ENCODE measurements at regions of chr22 and their contacts with region 1.

Region 1: DNA sequence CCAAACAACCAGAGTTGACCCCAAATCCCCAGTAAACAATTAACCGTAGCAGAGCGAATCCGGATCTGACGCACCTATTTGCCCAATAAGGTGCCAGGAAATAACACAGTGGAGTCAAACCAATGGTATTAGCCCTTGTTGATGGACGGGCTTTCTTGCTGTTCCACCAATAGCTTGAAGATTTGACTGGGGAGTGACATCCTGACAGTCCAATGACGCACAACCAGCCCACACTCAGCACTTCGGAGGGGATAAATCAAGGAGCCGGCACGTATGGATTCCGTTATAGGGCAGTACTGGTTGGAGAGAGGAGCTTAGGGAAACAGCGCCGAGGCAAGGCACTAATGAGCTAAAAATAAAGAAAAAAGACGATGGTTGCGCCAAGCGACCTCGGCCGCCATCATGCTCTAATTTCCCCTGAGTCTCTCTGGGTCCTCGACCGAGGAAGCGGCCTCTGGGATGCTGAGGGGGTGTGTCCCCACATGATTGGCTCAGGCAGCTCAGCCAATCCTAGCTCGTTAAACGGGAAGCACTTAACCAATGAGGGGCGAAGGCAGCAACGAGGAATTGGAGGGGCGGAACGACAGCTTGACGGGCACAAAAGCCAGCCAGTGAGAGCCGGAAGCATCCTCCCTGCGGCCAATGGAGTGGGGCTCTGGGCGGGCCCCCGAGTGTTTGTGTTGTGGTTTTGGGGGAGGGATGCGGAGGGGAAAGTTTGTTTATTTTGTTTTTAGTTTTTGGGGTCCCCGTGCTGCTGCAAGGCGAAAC is 49.5 kb downstream of the FAM83F start:
- DNase-seq: peak; percentile 99
- ATAC-seq: peak; percentile 91 to 92
- H3K4me3 ChIP-seq: peak overlapping the region; percentile 72 to 86 (median 76)
- H3K27ac ChIP-seq: peak overlapping the region; percentile 91 to 98 (median 94)
- H3K4me1 ChIP-seq: peaks cover 41 to 47% of the 10 kb centered on the region in 2 donors
- H3K27me3 ChIP-seq: no peaks in the 10 kb centered on the region
- CTCF ChIP-seq: no peak
- POLR2A ChIP-seq: peak; percentile 72 to 92

Region 2: GRCh38 chr22:39152511-39153219 is 891.6 kb before region 1 on chr22 and contains the start of gene CBX7:
- in situ Hi-C with region 1: no loop called
- intact Hi-C with region 1: loop called (anchors 2 kb)
- DNase-seq: peak; percentile 90 to 95
- ATAC-seq: peak; percentile 79 to 87
- H3K4me3 ChIP-seq: peak within 1 kb of the TSS; percentile 85 to 98 (median 97)
- H3K27ac ChIP-seq: peak within 1 kb of the TSS; percentile 94 to 99 (median 98)
- H3K4me1 ChIP-seq: peaks cover 29 to 31% of the 10 kb centered on the region in 2 donors
- H3K27me3 ChIP-seq: no peaks in the 10 kb centered on the region
- CTCF ChIP-seq: no peak
- POLR2A ChIP-seq: peak; percentile 87 to 96
- total RNA-seq, gene CBX7: 52.4 to 78.1 (median 62.3) TPM

Region 3: GRCh38 chr22:39980596-39980995 is 63.7 kb before region 1 on chr22:
- in situ Hi-C with region 1: no loop called
- intact Hi-C with region 1: no loop called
- DNase-seq: no peak
- ATAC-seq: no peak
- H3K4me3 ChIP-seq: no peak overlapping the region
- H3K27ac ChIP-seq: no peak overlapping the region
- H3K4me1 ChIP-seq: no peaks in the 10 kb centered on the region
- H3K27me3 ChIP-seq: peaks cover 0 to 28% (median 6%) of the 10 kb centered on the region in 3 donors
- CTCF ChIP-seq: no peak
- POLR2A ChIP-seq: no peak

Region 4: GRCh38 chr22:40070701-40071100 is 26.4 kb after region 1 on chr22:
- in situ Hi-C with region 1: no loop called
- intact Hi-C with region 1: loop called (anchors 2 kb)
- DNase-seq: no peak
- ATAC-seq: peak; percentile 89 to 90
- H3K4me3 ChIP-seq: no peak overlapping the region
- H3K27ac ChIP-seq: peak overlapping the region; percentile 62 to 78 (median 74)
- H3K4me1 ChIP-seq: peaks cover 50 to 51% of the 10 kb centered on the region in 2 donors
- H3K27me3 ChIP-seq: no peaks in the 10 kb centered on the region
- CTCF ChIP-seq: no peak
- POLR2A ChIP-seq: no peak

Region 5: GRCh38 chr22:40177738-40178416 is 133.6 kb after region 1 on chr22 and contains the start of gene TNRC6B:
- in situ Hi-C with region 1: loop called in 1 of 4 experiments (anchors 10 kb)
- intact Hi-C with region 1: loop called (anchors 1 kb)
- DNase-seq: peak; percentile 88
- ATAC-seq: peak; percentile 96 to 97
- H3K4me3 ChIP-seq: peak within 1 kb of the TSS; percentile 62 to 86 (median 75)
- H3K27ac ChIP-seq: peak within 1 kb of the TSS; percentile 77 to 91 (median 88)
- H3K4me1 ChIP-seq: peaks cover 63 to 71% of the 10 kb centered on the region in 2 donors
- H3K27me3 ChIP-seq: no peaks in the 10 kb centered on the region
- CTCF ChIP-seq: peak in 3 of 5 experiments; percentile 7 to 15 (median 14)
- POLR2A ChIP-seq: peak; percentile 96 to 98
- total RNA-seq, gene TNRC6B: 31.9 to 76.7 (median 57.0) TPM

Measured in gastrocnemius medialis (tissue), 4 donors.